GM23248 (cell line): ENCODE measurements at regions of chr18 and their contacts with region 1.

Region 1: DNA sequence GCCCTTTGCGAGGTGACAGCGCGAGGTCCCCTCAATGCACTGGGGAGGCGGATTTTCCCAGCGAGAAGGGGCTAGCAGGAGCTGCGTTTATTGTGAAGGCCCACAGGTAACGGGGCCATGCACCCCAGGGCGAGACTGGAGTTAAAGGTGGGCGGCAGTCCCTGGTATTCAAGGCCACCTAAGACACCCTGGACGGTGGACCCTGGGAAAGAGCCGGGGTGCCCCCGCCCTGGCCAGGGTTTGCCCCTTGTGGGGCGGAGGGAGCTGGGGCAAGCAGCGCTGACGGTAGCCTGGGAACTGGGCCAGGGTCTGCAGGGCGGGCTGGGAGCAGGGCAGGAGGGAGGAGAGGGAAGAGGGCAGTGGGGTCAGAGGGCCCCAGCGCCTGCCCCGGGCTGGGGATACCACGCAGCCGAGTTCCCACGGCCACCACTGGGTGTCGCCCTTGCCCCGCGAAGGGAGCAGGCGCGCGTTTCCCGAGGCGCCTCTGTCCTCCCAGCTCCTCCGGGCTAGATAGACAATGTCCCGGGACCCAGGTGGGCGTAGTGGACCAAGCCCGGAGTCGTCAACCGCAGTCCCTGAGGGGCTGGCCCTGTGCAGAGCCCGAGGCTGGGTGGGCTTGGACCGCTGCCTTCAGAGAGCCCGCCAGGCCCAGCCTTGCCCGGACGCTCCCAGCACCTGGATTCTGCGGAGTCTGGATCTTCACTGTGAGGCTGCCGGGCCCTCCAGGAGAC is 80.2 kb downstream of the SMAD4 start:
- DNase-seq: peak; percentile 70
- H3K4me3 ChIP-seq: no peak overlapping the region
- H3K27ac ChIP-seq: no peak overlapping the region
- H3K4me1 ChIP-seq: no peaks in the 10 kb centered on the region
- H3K27me3 ChIP-seq: no peaks in the 10 kb centered on the region

Region 2: GRCh38 chr18:51051105-51051712 is 59.0 kb before region 1 on chr18:
- in situ Hi-C with region 1: no loop called
- DNase-seq: peak; percentile 80
- H3K4me3 ChIP-seq: no peak overlapping the region
- H3K27ac ChIP-seq: no peak overlapping the region
- H3K4me1 ChIP-seq: peaks cover 15% of the 10 kb centered on the region
- H3K27me3 ChIP-seq: no peaks in the 10 kb centered on the region

Region 3: GRCh38 chr18:51383116-51383515 is 272.9 kb after region 1 on chr18:
- in situ Hi-C with region 1: loop called (anchors 10 kb)
- DNase-seq: no peak
- H3K4me3 ChIP-seq: no peak overlapping the region
- H3K27ac ChIP-seq: no peak overlapping the region
- H3K4me1 ChIP-seq: no peaks in the 10 kb centered on the region
- H3K27me3 ChIP-seq: no peaks in the 10 kb centered on the region

Region 4: GRCh38 chr18:51621113-51621863 is 511.1 kb after region 1 on chr18:
- in situ Hi-C with region 1: loop called (anchors 25 kb)
- DNase-seq: peak; percentile 69
- H3K4me3 ChIP-seq: peak overlapping the region; percentile 60
- H3K27ac ChIP-seq: no peak overlapping the region
- H3K4me1 ChIP-seq: 0 out of 2 replicates have a peak, but pooled peaks cover 4% of the 10 kb centered on the region
- H3K27me3 ChIP-seq: no peaks in the 10 kb centered on the region; the same call in 1 of the 2 replicates

Region 5: DNA sequence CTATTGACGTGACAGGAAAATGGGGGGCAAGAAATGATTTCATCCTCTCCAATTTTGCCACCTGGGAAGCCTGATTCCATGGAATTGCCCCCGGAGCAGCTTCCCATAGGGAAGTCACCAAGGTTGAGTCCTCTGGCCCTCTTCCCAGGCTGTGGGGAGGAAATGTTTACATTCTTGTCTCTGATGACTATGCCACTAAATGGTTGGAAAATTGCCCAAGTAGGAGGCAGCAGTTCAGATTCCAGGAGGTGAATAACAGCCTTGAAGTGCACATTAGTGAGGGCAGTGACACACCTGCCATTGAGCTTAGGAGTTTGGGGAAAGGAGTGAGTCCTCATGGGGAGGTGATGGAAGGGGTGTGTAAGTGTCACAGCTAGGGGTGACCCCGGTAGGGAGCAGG is 780.5 kb after region 1 on chr18:
- in situ Hi-C with region 1: loop called (anchors 25 kb)
- DNase-seq: peak; percentile 27
- H3K4me3 ChIP-seq: no peak overlapping the region
- H3K27ac ChIP-seq: no peak overlapping the region
- H3K4me1 ChIP-seq: no peaks in the 10 kb centered on the region
- H3K27me3 ChIP-seq: no peaks in the 10 kb centered on the region